CD4-positive, alpha-beta T cell (primary cell): ENCODE measurements at regions of chr9 and their contacts with region 1.

Region 1: GRCh38 chr9:16275795-16276624 is 594.5 kb downstream of the BNC2 start:
- DNase-seq: no peak
- ATAC-seq: no peak
- H3K4me3 ChIP-seq: no peak overlapping the region
- H3K4me3 Mint-ChIP-seq: no peak overlapping the region
- H3K27ac ChIP-seq: no peak overlapping the region
- H3K27ac Mint-ChIP-seq: no peak overlapping the region
- H3K4me1 ChIP-seq: no peaks in the 10 kb centered on the region
- H3K4me1 Mint-ChIP-seq: no peaks in the 10 kb centered on the region
- H3K27me3 ChIP-seq: no peaks in the 10 kb centered on the region
- H3K27me3 Mint-ChIP-seq: no peaks in the 10 kb centered on the region
- CTCF ChIP-seq: no peak

Region 2: DNA sequence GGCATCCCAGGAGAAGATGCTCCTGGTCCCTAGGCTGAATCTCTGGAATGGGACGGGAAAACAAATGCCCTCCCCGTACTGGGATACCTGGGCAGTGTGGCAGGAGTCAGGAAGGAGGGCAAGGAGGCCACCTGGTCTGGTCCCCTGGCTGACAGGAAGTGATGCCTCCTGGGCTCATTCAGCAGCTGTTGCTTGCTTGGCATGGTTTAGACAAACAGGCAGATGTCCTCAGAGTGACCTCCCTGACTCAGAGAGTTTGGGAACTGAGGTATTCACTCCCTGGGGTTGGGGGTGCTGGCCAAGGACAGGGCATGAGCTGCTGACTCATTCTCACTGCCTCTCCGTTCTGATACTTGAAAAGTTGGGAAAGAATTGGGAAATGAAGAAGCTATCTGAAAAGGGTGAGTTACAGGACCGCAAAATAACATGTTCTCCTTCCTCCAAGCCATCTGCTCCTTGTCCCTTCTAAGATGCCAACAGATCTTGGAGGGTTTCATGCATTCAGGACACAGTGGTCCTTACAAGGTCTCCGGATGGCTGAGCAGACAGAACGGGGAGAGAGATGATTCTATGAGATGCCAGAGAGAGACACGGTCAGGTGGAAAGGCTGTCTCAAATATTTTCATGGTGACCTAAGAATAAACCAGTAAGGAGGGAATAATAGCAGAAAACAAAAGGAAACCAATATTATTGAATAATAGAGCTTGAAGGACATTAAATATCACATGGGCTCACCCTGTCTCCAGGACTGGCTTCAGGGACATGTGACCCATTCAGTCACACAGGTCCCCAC is 60.0 kb after region 1 on chr9:
- CTCF ChIA-PET with region 1: no interaction called
- POLR2A ChIA-PET with region 1: no interaction called
- intact Hi-C with region 1: loop called in 1 of 2 experiments (anchors 10 kb)
- DNase-seq: peak in 2 of 14 experiments; percentile 29 to 36
- ATAC-seq: no peak
- H3K4me3 ChIP-seq: no peak overlapping the region
- H3K4me3 Mint-ChIP-seq: no peak overlapping the region
- H3K27ac ChIP-seq: no peak overlapping the region
- H3K27ac Mint-ChIP-seq: no peak overlapping the region
- H3K4me1 ChIP-seq: no peaks in the 10 kb centered on the region
- H3K4me1 Mint-ChIP-seq: no peaks in the 10 kb centered on the region
- H3K27me3 ChIP-seq: no peaks in the 10 kb centered on the region
- H3K27me3 Mint-ChIP-seq: no peaks in the 10 kb centered on the region
- CTCF ChIP-seq: no peak

Region 3: GRCh38 chr9:16721972-16722371 is 446.0 kb after region 1 on chr9:
- CTCF ChIA-PET with region 1: no interaction called
- POLR2A ChIA-PET with region 1: no interaction called
- intact Hi-C with region 1: no loop called
- DNase-seq: no peak
- ATAC-seq: no peak
- H3K4me3 ChIP-seq: no peak overlapping the region
- H3K4me3 Mint-ChIP-seq: no peak overlapping the region
- H3K27ac ChIP-seq: no peak overlapping the region
- H3K27ac Mint-ChIP-seq: no peak overlapping the region
- H3K4me1 ChIP-seq: no peaks in the 10 kb centered on the region
- H3K4me1 Mint-ChIP-seq: no peaks in the 10 kb centered on the region
- H3K27me3 ChIP-seq: peaks cover 9 to 19% of the 10 kb centered on the region in 2 experiments
- H3K27me3 Mint-ChIP-seq: peaks cover 24% of the 10 kb centered on the region
- CTCF ChIP-seq: no peak